Stomach (tissue), 19 donors: ENCODE measurements at regions of chr7 and their contacts with region 1.

Region 1: GRCh38 chr7:142181966-142182365 is 70.4 kb downstream of the MGAM2 start:
- DNase-seq: no peak
- H3K4me3 ChIP-seq: no peak overlapping the region
- H3K27ac ChIP-seq: no peak overlapping the region
- H3K4me1 ChIP-seq: no peaks in the 10 kb centered on the region
- H3K27me3 ChIP-seq: no peaks in the 10 kb centered on the region
- CTCF ChIP-seq: no peak
- EP300 ChIP-seq: no peak
- POLR2A ChIP-seq: no peak

Region 2: DNA sequence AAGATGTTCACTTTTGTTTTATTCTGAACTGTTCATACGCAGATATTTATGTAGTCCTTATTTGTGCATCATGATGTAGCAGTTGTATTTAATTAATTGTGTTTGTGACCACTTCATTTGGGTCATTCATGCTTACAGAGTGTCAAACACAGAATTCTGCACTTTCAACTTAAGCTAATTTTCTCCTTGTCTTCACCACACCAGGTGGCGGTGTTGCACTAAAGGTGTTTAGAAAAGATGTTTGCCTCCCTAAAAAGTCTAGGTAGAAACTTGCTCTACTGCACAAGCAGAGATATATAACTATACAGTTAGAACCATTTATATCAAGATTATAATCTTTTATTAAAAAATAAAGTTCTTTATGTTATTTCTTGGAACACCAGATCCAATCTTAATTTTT is 207.1 kb before region 1 on chr7:
- intact Hi-C with region 1: loop called (anchors 5 kb)
- DNase-seq: peak; percentile 46 to 65
- H3K4me3 ChIP-seq: no peak overlapping the region
- H3K27ac ChIP-seq: no peak overlapping the region
- H3K4me1 ChIP-seq: peaks cover 0 to 13% (median 2%) of the 10 kb centered on the region in 4 donors
- H3K27me3 ChIP-seq: no peaks in the 10 kb centered on the region
- CTCF ChIP-seq: peak in 3 of 7 experiments; percentile 11 to 42 (median 26)
- EP300 ChIP-seq: no peak
- POLR2A ChIP-seq: no peak

Region 3: DNA sequence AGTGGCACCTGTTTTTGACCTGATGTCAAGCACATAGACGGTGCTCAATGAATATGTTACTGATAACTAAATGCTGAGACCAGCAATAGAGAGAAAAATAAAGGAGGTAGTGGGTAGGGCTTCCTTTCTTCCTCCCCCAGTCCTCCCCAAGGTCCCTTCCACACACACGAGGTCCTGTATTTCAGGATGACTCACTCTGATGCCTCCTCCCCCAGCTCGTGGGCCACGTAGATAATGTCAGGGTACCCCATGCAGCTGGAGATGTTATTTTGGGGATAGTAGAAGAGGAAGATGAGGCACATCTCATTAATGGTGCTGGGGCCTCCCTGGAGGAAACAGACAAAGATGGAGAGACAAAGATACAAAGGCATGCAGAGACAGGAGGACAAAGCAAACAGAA is 58.6 kb after region 1 on chr7:
- intact Hi-C with region 1: no loop called
- DNase-seq: no peak
- H3K4me3 ChIP-seq: no peak overlapping the region
- H3K27ac ChIP-seq: no peak overlapping the region
- H3K4me1 ChIP-seq: no peaks in the 10 kb centered on the region
- H3K27me3 ChIP-seq: no peaks in the 10 kb centered on the region
- CTCF ChIP-seq: no peak
- EP300 ChIP-seq: no peak
- POLR2A ChIP-seq: no peak